ENCODE measurements at regions of chr5 and their contacts with region 1.

Region 1: DNA sequence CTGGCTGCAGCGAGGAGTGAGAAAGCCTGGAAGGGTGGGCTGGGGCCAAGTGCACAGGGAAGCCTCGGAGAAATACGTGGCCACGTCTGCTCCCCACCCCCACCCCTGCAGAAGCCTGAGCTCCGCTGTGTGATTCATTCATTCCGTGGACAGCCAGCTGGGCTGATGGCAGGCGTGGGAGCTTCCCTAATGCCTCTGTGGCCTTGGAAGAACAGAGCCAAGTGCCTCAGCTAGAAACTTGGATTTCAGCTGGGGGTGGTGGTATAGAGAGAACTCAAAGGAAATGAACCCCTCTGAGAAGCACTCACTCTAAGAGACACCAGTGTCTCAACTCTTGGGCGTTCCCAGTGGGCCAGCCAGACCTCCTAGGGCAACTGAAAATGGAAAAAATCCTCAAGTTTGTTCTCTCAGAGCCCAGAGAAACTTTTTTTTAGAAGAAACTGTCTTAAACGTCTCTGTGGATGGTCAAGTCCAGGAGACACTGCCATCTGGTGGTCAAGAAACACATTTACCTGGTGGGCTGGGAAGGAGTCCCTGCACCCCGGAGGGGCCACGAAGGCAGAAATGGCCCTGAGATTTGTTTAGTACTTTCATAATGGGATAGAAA is 18.0 kb downstream of the ATOX1 start:
- DNase-seq: peak; percentile 40
- H3K4me3 ChIP-seq: no peak overlapping the region
- H3K27ac ChIP-seq: peak overlapping the region; percentile 52 to 74 (median 68)
- H3K4me1 ChIP-seq: peaks cover 3 to 25% (median 10%) of the 10 kb centered on the region in 4 donors
- H3K27me3 ChIP-seq: no peaks in the 10 kb centered on the region
- CTCF ChIP-seq: peak; percentile 87 to 93 (median 91)
- EP300 ChIP-seq: no peak
- POLR2A ChIP-seq: no peak

Region 2: DNA sequence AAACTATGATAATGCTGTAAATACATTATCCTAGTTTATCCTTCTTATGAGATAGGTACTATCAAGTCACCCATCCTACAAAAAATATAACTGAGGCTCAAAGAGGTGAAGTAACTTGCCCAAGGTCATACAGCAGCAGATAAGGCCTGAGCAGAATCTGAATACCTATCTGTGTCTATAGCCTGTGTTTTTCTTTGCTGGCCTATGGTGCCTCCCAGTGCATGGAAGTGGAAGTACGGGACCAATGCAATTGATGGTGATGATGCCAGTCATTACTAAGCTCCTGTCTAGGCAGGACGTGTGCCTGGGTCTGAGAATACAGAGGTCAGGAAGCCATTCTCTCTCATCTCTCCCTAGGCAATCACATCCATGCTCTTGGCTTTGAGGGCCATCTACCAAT is 217.1 kb before region 1 on chr5:
- in situ Hi-C with region 1: loop called in 1 of 4 experiments (anchors 25 kb)
- intact Hi-C with region 1: no loop called
- DNase-seq: no peak
- H3K4me3 ChIP-seq: no peak overlapping the region
- H3K27ac ChIP-seq: no peak overlapping the region
- H3K4me1 ChIP-seq: no peaks in the 10 kb centered on the region
- H3K27me3 ChIP-seq: no peaks in the 10 kb centered on the region
- CTCF ChIP-seq: peak in 4 of 5 experiments; percentile 34 to 46 (median 40)
- EP300 ChIP-seq: no peak
- POLR2A ChIP-seq: no peak

Region 3: DNA sequence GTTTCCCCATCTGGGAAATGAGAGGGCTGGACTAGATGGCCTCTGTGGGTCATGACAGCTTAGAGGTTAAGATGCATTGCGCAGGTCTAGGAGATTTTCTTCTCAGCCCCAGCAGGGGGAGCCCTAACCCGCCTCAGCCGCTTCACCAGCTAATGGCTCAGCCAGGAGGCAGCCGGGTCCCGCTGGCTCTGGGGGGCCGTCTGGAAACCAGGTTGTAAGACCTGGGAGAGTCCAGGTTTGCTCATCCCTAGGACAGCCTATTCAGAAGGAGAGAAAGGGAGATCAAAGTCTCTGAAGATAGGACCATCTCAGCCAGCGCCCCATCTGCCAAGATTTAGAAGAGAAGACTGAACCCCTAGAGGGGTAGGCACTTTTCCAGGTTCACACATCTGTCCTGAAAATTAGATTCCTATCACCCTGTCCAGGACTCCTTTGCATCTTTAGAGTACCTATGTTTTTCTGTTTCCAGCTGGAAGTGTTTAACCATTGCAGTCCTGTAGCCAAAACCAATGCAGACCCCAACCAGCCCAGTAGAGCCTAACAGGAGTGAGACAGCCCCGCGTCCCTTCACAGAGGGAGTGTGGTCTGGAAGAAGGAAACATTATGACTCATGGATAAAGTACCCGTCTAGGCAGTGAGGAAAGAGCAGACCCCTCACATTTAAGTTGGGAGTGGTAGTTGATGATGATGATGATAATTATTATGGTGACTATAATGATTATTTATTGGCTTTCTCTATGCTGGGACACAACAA is 81.3 kb before region 1 on chr5:
- in situ Hi-C with region 1: loop called (anchors 5 to 10 kb)
- intact Hi-C with region 1: loop called (anchors 2 kb)
- DNase-seq: peak; percentile 85
- H3K4me3 ChIP-seq: no peak overlapping the region
- H3K27ac ChIP-seq: peak overlapping the region in 1 of 4 donors; percentile 14
- H3K4me1 ChIP-seq: peaks cover 0 to 12% (median 5%) of the 10 kb centered on the region in 4 donors
- H3K27me3 ChIP-seq: no peaks in the 10 kb centered on the region
- CTCF ChIP-seq: peak; percentile 81 to 90 (median 87)
- EP300 ChIP-seq: no peak
- POLR2A ChIP-seq: no peak

Region 4: GRCh38 chr5:151947925-151948608 is 207.6 kb after region 1 on chr5:
- in situ Hi-C with region 1: no loop called
- intact Hi-C with region 1: no loop called
- DNase-seq: no peak
- H3K4me3 ChIP-seq: no peak overlapping the region
- H3K27ac ChIP-seq: no peak overlapping the region
- H3K4me1 ChIP-seq: no peaks in the 10 kb centered on the region
- H3K27me3 ChIP-seq: no peaks in the 10 kb centered on the region
- CTCF ChIP-seq: no peak
- EP300 ChIP-seq: no peak
- POLR2A ChIP-seq: no peak

Measured in transverse colon (tissue), 4 donors.